ENCODE measurements at regions of chr7 and their contacts with region 1.

Region 1: DNA sequence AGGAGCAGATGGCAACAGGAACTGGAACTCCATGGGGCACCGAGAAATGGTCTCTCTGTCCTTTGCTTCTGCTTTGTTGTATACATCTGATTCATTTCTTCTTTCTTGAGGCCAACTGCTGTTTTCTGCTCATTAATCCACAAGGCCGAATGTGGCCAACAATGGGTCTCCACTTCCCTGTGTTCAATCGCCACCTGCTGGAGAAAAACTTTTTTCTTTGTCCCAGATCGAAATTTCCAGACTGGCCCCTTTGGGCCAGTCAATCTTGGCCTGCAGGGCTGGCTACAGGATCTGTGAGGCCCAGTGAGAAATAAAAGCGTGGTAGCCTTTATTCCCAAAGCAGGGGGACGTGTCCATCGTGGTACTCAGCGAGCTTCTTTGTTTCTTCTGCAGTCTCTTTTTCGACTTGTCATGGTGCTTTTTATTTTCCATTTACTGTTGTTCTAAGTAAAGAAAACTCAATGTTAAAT is 58.8 kb downstream of the PARP12 start:
- DNase-seq: no peak
- H3K4me3 ChIP-seq: no peak overlapping the region
- H3K27ac ChIP-seq: no peak overlapping the region
- H3K4me1 ChIP-seq: no peaks in the 10 kb centered on the region
- H3K27me3 ChIP-seq: no peaks in the 10 kb centered on the region
- CTCF ChIP-seq: peak; percentile 18 to 41 (median 21)

Region 2: GRCh38 chr7:139500770-139501138 is 503.2 kb before region 1 on chr7:
- intact Hi-C with region 1: loop called (anchors 2 kb)
- DNase-seq: no peak
- H3K4me3 ChIP-seq: no peak overlapping the region
- H3K27ac ChIP-seq: no peak overlapping the region
- H3K4me1 ChIP-seq: no peaks in the 10 kb centered on the region
- H3K27me3 ChIP-seq: no peaks in the 10 kb centered on the region
- CTCF ChIP-seq: no peak

Region 3: DNA sequence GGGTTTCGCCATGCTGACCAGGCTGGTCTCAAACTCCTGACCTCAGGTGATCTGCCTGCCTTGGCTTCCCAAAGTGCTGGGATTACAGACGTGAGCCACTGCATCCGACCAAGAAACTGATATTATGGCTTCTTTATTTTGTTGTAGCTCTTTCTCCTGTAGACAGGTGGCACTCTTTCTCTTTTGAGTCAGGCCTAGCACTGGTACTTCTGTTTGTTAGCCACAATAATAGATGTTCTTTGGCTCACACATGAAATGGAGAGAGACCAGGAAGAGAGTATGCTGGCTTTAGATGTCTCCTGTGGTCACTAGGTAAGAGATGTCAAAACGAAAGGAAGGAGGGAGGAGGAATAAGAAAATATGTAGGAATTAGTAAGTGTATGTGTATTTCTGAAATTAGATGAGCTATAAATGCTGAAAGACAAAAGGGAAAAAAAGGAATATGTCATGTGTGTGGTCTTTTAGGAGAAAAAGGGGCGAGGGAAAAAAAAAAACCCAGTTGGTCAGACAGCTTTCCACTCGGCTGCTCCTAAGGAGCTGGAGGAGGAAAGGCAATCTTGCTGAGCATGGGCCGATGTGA is 401.7 kb before region 1 on chr7:
- intact Hi-C with region 1: loop called (anchors 5 kb)
- DNase-seq: no peak
- H3K4me3 ChIP-seq: no peak overlapping the region
- H3K27ac ChIP-seq: no peak overlapping the region
- H3K4me1 ChIP-seq: no peaks in the 10 kb centered on the region
- H3K27me3 ChIP-seq: no peaks in the 10 kb centered on the region
- CTCF ChIP-seq: peak in 2 of 3 experiments; percentile 36 to 55

Region 4: GRCh38 chr7:139618482-139619366 is 385.2 kb before region 1 on chr7:
- intact Hi-C with region 1: loop called (anchors 1 kb)
- DNase-seq: no peak
- H3K4me3 ChIP-seq: no peak overlapping the region
- H3K27ac ChIP-seq: no peak overlapping the region
- H3K4me1 ChIP-seq: no peaks in the 10 kb centered on the region
- H3K27me3 ChIP-seq: no peaks in the 10 kb centered on the region
- CTCF ChIP-seq: peak in 1 of 3 experiments; percentile 50

Region 5: GRCh38 chr7:139645572-139646523 is 358.1 kb before region 1 on chr7:
- intact Hi-C with region 1: loop called (anchors 1 kb)
- DNase-seq: peak; percentile 50 to 91
- H3K4me3 ChIP-seq: no peak overlapping the region
- H3K27ac ChIP-seq: peak overlapping the region; percentile 37 to 70
- H3K4me1 ChIP-seq: peaks cover 0 to 6% of the 10 kb centered on the region in 2 donors
- H3K27me3 ChIP-seq: no peaks in the 10 kb centered on the region
- CTCF ChIP-seq: peak; percentile 88 to 94 (median 90)